GM10248 (cell line): ENCODE measurements at regions of chr17 and their contacts with region 1.

Region 1: DNA sequence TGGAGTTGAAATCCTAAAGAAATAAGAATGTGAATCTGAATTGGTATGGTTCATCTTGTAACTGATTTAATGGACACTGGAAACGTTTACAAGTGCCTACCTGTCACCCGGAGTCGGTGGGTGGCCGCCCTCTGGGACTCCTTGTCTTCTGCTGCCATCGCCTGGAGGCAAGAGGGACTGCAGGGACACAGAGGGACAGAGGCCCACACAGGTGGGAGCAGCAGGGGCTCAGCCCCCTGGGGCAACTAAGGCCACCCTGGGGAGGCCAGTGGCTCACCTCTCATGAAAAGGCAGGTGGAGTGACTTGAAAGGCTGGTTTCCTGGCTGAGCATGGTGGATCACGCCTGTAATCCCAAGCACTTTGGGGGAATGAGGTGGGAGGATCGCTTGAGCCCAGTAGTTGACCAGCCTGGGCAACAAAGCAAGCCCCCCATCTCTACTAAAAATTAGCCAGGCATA is 23.2 kb downstream of the TMEM92 start:
- DNase-seq: peak; percentile 82
- CTCF ChIP-seq: peak; percentile 98

Region 2: DNA sequence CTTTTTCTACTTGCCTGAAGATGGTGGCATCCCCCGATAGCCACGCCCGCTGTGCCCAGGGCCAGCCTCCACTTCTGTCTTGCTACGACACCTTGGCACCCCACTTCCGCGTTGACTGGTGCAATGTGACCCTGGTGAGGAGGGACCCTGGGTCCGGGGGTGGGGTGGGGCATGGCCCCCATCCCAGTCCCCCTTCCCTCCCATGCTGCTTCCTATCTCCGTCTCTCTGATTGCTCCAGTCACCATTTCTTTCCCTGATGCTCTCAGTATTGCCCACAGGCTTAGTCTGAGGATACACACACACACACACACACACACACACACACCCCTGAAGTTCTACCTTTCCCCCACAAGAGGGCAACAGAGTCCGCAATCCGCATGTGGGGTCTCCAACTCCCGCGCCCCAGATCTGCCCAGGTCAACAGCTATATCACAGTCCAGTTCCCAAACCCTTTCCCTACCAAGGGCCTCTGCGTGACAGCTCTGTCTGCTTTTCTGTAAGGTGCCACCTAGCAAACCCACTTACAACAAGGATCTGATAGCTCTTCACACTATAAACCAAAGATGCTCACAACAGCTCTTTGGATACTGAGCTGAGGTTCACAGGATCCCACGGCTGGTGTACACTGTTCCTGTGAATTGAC is 128.2 kb before region 1 on chr17:
- CTCF ChIA-PET with region 1: interaction called, 58 read pairs
- POLR2A ChIA-PET with region 1: no interaction called
- DNase-seq: peak; percentile 75
- CTCF ChIP-seq: peak; percentile 84

Region 3: GRCh38 chr17:50213026-50214022 is 84.1 kb before region 1 on chr17:
- CTCF ChIA-PET with region 1: interaction called, 30 read pairs
- POLR2A ChIA-PET with region 1: no interaction called
- DNase-seq: peak; percentile 76
- CTCF ChIP-seq: no peak

Region 4: GRCh38 chr17:50279181-50279526 is 18.3 kb before region 1 on chr17:
- CTCF ChIA-PET with region 1: interaction called, 35 read pairs
- POLR2A ChIA-PET with region 1: no interaction called
- DNase-seq: no peak
- CTCF ChIP-seq: no peak